HEK293T (cell line): ENCODE measurements at regions of chr9 and their contacts with region 1.

Region 1: DNA sequence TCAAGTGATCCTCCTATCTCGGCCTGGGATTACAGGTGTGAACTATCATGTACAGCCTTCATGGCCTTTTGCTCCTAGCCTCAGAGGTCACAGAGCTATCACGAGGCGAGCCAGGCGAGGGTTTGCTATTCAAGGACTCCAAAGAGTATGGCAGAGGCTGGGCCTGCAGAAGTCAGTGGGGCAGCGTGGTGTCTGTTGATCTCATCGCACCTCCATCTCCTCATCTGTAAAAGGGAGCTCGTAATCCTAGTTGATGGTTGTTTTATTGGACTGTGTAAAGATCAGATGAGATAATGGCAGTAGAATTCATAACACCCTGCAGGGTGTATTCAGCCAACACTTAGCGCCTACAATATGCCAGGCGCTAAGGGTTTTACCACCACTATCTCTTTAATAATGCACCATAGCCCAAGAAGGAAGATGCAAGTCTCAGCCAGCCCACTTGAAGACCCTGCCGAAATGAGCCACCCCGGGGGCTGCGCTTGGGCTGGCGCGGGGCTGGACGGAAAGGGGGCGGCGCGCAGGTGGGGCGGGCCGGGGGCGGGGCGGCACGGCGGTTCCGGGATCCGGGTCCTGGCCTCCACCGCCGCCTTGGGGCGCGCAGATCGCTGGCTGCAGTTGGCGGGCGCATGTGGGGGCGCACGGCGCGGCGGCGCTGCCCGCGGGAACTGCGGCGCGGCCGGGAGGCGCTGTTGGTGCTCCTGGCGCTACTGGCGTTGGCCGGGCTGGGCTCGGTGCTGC is at the start of gene GALNT12:
- DNase-seq: peak; percentile 47

Region 2: DNA sequence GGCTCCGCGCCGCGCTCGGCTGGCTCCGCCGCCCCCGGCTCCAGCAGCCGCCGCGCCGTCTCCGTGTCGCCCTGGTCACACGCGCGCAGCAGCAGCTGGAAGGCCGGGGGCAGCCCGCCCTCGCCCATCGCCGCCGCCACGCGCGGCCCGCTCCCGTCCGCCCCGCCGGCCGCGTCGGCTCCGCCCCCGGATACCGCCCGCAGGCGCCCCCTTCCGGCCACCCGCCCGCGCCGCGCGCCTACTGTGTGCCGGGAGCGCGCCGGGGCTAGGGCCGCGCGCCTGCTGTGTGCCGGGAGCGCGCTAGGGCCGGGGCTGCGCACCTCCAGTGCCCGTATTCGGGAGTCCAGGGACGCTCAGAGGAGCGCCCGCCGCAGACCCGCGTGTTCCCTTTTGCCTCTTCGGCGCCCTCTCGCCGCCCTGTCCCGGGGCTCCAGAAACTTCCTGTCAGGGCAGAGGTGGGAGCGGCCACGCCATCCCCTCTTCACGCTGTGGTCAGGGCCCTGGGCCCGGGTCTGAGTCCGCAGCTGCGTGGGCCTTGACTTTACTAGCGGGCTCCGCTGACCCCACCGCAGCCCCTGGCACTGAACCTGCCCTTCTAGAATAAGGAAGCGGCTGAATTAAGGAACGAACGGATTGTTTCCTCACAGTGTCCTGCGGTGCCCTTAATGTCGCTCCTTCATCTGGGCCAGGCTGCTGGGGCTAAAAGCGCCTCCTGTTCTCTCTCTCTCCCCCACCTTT is 10.7 kb before region 1 on chr9 and contains the start of gene ANKS6:
- CTCF ChIA-PET with region 1: interaction called, 10 read pairs
- POLR2A ChIA-PET with region 1: interaction called, 10 read pairs
- DNase-seq: peak; percentile 90